ENCODE measurements at regions of chr20 and their contacts with region 1.

Region 1: DNA sequence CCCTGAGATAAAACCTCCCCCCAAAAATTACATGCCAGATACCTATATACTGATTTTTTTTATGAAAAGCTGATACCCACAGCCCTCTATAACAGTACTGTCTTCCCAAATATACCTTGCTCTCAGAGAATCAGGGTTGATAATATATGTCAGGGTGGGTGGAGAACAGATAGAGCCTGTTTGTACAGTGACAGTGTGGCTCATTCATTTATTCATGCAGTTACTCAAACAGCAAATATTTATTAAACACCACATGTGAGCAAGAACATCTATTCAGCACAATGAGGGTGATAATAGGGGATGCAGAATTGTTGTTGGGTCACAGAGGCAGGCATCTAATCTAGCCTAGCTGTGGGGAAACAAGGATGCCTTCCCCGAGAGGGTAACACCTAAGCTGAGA is 334.2 kb downstream of the MAFB start:
- DNase-seq: no peak
- H3K4me3 ChIP-seq: no peak overlapping the region
- H3K27ac ChIP-seq: no peak overlapping the region
- H3K4me1 ChIP-seq: peaks cover 14% of the 10 kb centered on the region
- H3K27me3 ChIP-seq: peaks cover 0 to 2% of the 10 kb centered on the region in 2 experiments
- CTCF ChIP-seq: no peak
- POLR2A ChIP-seq: no peak

Region 2: GRCh38 chr20:40293740-40294139 is 61.1 kb before region 1 on chr20:
- CTCF ChIA-PET with region 1: no interaction called
- POLR2A ChIA-PET with region 1: no interaction called
- dilution Hi-C with region 1: no loop called
- intact Hi-C with region 1: loop called (anchors 2 kb)
- DNase-seq: peak; percentile 79
- H3K4me3 ChIP-seq: no peak overlapping the region
- H3K27ac ChIP-seq: peak overlapping the region; percentile 89
- H3K4me1 ChIP-seq: peaks cover 22% of the 10 kb centered on the region
- H3K27me3 ChIP-seq: no peaks in the 10 kb centered on the region
- CTCF ChIP-seq: no peak
- POLR2A ChIP-seq: no peak

Region 3: GRCh38 chr20:40314278-40314677 is 40.6 kb before region 1 on chr20:
- CTCF ChIA-PET with region 1: no interaction called
- POLR2A ChIA-PET with region 1: no interaction called
- dilution Hi-C with region 1: no loop called
- intact Hi-C with region 1: no loop called
- DNase-seq: peak; percentile 61
- H3K4me3 ChIP-seq: no peak overlapping the region
- H3K27ac ChIP-seq: no peak overlapping the region
- H3K4me1 ChIP-seq: no peaks in the 10 kb centered on the region
- H3K27me3 ChIP-seq: no peaks in the 10 kb centered on the region
- CTCF ChIP-seq: no peak
- POLR2A ChIP-seq: no peak

Region 4: DNA sequence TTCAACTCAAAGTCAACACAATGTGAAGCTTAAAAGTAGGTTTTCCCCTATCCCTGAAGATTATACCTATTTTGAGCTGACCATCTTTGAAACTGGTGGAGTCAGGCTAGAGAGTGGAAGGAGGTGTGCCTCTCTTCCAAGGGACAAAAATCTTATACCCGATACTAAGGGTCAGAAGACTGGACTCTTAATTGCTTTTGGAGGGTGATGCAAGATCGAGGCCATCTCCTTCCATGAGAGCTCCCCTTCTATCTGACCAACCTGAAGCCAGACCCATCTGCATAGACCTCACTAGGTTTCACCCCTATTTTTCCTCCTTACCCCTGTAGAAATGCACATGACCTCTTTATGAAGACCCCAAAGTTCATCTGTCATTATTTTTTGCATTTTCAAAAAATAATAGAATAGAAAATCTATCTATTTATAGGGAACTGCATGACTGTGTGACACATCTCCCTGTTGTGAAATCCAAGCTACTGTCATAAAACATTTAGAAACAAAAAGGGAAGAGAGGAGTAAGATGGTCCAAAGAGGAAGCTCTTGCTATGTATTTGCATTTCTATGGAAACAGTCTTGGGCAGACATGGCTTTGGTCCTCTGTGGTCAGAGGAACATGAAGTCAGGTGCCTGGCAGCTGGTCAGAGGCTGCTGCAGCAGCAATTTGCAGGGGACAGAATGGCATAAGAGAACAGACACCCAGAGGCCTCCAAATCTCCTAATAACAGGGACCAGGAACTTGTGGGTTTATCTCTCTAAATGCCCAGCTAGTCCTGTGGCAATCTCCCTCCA is 15.0 kb before region 1 on chr20:
- CTCF ChIA-PET with region 1: no interaction called
- POLR2A ChIA-PET with region 1: no interaction called
- dilution Hi-C with region 1: no loop called
- intact Hi-C with region 1: no loop called
- DNase-seq: no peak
- H3K4me3 ChIP-seq: no peak overlapping the region
- H3K27ac ChIP-seq: no peak overlapping the region
- H3K4me1 ChIP-seq: no peaks in the 10 kb centered on the region
- H3K27me3 ChIP-seq: peaks cover 0 to 1% of the 10 kb centered on the region in 2 experiments
- CTCF ChIP-seq: no peak
- POLR2A ChIP-seq: no peak